ENCODE measurements at regions of chr6 and their contacts with region 1.

Region 1: DNA sequence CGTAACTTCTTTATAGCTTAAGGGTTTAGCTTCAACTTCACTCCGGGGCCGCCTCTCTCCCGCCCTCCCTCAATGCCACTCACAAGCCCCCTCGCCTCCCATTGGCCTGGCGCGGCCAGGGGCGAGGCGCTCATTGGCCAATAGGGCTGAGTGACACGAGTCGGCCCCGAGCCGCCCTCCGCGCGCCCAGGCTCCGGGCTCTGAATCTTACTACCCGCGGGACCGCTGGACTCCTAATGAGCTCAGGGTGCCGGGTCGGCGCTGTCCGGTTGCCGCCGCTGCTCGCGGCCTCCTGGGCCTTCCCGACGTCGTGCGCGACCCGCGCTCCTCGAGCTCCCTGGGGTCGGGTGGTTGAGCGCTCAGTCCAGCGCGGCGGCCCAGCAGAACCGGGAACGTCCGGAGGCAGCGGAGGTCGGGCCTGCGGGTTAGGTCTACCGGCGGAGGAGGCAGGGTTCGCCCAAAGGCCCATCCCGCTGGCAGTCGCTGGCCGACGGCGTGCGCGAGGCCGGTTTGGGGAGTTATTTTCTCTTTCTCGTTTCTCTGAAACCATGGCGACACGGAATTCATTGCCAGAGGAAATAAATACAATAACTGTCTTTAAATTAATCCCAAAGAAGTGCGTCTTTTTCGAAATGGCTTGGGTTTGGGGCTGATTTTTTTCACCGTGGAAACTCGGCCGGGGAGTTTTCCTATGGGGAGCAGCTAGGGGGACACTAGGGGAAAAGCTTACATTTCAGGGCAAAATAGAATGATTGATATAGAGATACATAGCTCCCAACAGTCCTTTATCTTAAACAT is at the start of gene SIM1:
- DNase-seq: no peak
- H3K4me3 Mint-ChIP-seq: no peak within 1 kb of the TSS
- H3K27ac Mint-ChIP-seq: peak within 1 kb of the TSS; percentile 20
- H3K4me1 Mint-ChIP-seq: peaks cover 19% of the 10 kb centered on the region
- H3K27me3 Mint-ChIP-seq: peaks cover 85% of the 10 kb centered on the region
- total RNA-seq, gene SIM1: not detected in 2 replicates

Region 2: DNA sequence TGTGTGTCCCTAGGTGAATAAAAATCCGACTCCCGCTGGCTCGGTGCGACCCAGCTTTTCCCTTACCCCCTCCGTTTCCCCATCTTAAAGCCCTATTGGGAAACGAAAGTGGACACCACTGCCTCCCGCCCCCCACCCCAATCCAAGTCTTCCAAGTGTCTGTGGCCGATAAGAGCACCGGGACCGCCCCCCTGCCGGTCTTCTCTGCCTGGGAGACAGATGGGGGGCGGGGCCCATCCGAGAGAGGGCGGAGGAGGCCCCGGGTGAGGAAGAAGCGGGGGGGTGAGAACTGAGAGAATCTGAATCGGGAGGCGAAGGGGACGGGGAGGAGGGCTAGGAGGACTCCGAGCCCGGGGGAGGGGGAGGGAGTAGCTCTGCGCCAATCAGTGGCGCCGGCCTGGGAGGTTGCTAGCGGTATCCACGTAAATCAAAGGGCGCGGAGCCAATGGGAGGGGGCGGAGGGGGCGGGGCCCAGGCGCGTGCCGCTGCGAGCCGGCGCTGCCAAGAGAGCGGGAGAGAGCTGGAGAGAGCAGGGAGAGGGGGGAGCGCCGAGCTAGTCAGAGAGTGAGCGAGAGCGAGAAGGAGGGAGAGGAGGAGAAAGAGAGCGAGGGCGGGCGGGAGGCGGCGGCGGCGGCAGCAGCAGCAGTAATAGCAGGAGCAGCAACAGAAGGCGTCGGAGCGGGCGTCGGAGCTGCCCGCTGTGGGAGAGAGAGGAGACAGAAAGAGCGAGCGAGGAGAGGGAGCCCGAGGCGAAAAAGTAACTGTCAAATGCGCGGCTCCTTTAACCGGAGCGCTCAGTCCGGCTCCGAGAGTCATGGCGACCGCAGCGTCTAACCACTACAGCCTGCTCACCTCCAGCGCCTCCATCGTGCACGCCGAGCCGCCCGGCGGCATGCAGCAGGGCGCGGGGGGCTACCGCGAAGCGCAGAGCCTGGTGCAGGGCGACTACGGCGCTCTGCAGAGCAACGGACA is 1630.8 kb before region 1 on chr6 and contains the start of gene POU3F2:
- intact Hi-C with region 1: loop called (anchors 5 kb)
- DNase-seq: peak; percentile 84
- H3K4me3 Mint-ChIP-seq: peak within 1 kb of the TSS; percentile 81
- H3K27ac Mint-ChIP-seq: peak within 1 kb of the TSS; percentile 67
- H3K4me1 Mint-ChIP-seq: peaks cover 29% of the 10 kb centered on the region
- H3K27me3 Mint-ChIP-seq: peaks cover 78% of the 10 kb centered on the region
- total RNA-seq, gene POU3F2: not detected in 2 replicates

Region 3: DNA sequence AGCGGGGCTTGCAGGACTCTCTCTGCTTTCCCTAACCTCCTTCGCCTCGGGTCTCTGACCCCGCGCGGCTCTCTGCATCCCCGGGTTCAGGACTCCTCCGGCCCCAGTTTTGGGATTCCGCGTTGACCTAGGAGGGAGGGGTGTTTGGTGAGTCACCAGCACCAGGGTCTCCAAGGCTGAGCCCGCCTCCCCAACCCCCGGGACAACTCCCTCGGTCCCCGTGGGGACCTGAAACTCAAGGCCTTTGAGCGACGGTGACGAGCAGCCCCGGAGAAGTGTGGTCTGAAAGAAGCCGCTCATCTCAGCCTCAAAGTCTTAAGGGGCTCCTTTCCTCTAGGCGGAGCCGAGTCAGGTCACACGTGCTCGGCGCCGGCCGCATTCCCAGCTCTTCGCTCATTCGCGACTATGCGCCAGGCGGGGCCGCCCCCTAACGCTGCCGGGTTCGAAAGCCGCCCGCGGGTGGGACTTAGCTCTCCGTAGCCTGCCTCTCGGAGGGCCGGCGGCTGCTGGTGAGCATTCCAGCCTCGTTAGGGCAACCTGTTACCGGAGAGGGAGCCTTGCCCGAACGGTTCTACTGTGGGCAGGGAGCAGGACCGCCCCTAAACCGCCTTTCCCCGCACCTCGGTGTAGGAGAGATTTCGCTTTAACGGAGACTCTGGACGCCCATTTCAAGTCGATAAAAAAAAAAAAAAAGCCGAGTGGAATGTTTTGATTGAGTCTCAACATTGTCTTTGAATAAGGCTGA is 861.5 kb before region 1 on chr6:
- intact Hi-C with region 1: loop called (anchors 2 kb)
- DNase-seq: peak; percentile 71
- H3K4me3 Mint-ChIP-seq: peak overlapping the region; percentile 39
- H3K27ac Mint-ChIP-seq: peak overlapping the region; percentile 11
- H3K4me1 Mint-ChIP-seq: peaks cover 19% of the 10 kb centered on the region
- H3K27me3 Mint-ChIP-seq: peaks cover 87% of the 10 kb centered on the region

Region 4: GRCh38 chr6:99613409-99613704 is 851.7 kb before region 1 on chr6:
- intact Hi-C with region 1: loop called (anchors 2 kb)
- DNase-seq: peak; percentile 76
- H3K4me3 Mint-ChIP-seq: peak overlapping the region; percentile 55
- H3K27ac Mint-ChIP-seq: no peak overlapping the region
- H3K4me1 Mint-ChIP-seq: peaks cover 29% of the 10 kb centered on the region
- H3K27me3 Mint-ChIP-seq: peaks cover 75% of the 10 kb centered on the region

Region 5: DNA sequence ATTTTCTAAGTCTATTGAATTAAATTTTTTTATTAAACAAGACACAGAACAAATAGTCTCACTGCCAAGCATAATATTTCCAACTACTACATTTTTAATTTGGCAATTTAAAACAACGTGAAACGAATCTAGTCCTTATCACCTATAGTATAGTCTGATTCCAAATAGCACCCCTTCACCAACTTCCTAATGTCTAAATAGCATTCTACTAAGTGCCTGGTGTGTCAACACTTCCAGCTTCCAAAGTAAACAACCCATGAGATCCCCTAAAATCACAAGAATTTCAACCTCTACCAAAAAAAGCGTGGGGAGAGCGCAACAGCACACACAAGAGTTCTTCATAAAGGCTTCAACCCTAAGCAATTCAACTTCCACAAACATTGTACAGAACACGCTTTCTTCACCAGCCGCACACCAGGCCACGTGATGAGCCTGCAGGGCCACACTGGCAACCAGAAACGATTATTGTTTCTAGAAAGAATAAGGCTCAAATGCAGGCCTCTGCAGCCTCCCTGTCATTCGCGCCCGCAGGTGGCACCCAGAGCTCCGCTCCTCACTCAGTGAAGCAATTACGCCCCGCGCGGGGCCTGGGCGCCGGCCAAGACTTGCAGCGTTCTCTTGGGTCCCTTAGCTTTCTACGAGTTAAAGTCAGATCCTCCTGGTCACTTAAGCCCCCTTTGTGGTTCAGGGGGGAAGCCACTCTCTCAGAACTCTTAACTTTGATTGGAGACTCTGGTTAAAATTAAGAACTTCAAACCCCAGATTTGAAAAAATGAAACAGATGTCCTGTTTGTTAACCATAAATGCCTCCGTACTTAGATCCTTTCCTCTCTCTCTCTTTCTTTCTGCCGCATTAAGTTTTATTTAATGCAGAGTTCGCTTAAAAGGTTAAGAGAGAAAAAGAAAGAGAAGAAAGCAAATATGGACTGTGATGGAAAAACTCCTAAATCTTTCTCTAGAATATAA is 18.7 kb before region 1 on chr6:
- intact Hi-C with region 1: loop called (anchors 2 kb)
- DNase-seq: no peak
- H3K4me3 Mint-ChIP-seq: no peak overlapping the region
- H3K27ac Mint-ChIP-seq: peak overlapping the region; percentile 14
- H3K4me1 Mint-ChIP-seq: peaks cover 7% of the 10 kb centered on the region
- H3K27me3 Mint-ChIP-seq: peaks cover 62% of the 10 kb centered on the region

Measured in activated CD4-positive, alpha-beta T cell treated with anti-CD3 and anti-CD28 coated beads, Interleukin-2, amount 10 ng/mL, durations not matched to agents 24 days and 14 days (primary cell).